ENCODE measurements at regions of chr3 and their contacts with region 1.

Region 1: DNA sequence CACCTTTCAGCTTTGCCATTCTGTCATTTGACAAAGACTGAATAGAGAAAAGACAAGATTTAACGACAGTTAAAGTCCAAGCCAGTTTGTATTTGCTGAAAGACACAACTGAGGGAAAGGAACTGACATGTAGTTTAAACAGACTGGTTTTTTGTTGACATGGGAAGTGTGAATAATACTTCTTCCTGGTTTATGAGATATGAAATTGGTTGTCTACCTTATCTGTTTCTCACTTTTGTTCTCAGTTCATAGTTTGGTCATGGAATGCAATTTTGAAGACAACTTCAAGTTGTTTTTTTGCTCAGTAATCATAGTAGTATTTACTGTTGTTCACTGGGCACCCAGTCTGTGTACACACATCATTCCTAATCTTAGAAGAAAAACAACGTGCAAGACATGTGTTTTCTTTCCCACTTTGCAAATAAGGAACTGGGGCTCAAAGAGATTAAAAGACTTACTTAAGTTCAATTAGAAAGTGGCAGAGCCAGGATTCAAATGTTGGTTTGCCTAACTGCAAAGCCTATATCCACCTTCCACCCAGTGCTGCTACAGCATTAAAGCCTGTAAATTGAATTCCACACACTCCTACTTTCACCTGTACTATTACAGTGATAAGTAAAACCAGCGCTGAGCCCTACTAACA is 103.5 kb downstream of the LPP start:
- DNase-seq: no peak
- H3K4me3 Mint-ChIP-seq: no peak overlapping the region
- H3K27ac Mint-ChIP-seq: peak overlapping the region; percentile 63
- H3K4me1 Mint-ChIP-seq: peaks cover 62% of the 10 kb centered on the region
- H3K27me3 Mint-ChIP-seq: peaks cover 2% of the 10 kb centered on the region

Region 2: DNA sequence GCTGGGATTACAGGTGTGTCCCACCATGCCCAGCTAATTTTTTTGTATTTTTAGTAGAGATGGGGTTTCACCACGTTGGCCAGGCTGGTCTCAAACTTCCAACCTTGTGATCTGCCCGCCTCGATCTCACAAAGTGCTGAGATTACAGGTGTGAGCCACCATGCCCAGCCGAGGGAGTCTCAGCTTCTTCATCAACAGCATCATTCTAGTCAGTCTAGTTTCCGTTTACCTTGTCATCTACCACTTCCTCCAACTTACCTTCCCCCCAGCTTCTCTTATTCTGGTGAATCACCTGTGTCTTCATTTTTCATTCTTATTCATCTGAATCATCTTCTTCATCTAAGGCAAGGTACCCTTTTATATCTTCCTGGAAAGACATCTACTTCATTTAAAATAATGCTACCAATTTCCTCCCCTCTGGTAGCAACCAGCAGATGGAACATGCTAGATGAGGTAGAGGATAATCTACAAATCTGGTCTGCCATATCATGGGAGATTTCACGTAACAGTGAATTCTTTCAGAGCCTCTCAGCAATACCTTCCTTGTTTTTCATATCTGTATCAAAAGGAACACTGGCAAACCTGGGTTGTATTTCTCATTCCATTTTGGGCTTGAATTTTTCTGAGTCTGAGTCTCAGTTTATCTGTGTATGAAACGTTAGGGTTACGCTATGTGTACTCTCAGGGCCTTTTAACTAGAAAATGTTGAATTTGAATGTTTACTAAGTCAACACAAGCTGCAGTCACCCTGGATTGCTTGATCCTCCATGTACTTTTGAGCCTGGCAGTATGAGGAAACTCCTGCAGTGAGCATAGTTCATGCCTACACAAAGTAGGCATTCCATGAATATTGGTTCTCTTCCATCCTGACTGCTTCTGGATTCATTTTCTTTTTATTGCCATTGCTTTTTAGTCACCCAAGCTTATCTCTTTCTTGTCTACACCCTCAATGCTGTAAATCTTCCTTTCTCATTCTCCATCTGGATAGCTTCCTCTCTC is 86.7 kb before region 1 on chr3:
- intact Hi-C with region 1: loop called (anchors 5 kb)
- DNase-seq: no peak
- H3K4me3 Mint-ChIP-seq: peak overlapping the region; percentile 9
- H3K27ac Mint-ChIP-seq: peak overlapping the region; percentile 49
- H3K4me1 Mint-ChIP-seq: peaks cover 52% of the 10 kb centered on the region
- H3K27me3 Mint-ChIP-seq: no peaks in the 10 kb centered on the region

Region 3: GRCh38 chr3:188272481-188273372 is 15.2 kb after region 1 on chr3:
- intact Hi-C with region 1: loop called (anchors 2 kb)
- DNase-seq: no peak
- H3K4me3 Mint-ChIP-seq: no peak overlapping the region
- H3K27ac Mint-ChIP-seq: no peak overlapping the region
- H3K4me1 Mint-ChIP-seq: peaks cover 46% of the 10 kb centered on the region
- H3K27me3 Mint-ChIP-seq: peaks cover 2% of the 10 kb centered on the region

Region 4: DNA sequence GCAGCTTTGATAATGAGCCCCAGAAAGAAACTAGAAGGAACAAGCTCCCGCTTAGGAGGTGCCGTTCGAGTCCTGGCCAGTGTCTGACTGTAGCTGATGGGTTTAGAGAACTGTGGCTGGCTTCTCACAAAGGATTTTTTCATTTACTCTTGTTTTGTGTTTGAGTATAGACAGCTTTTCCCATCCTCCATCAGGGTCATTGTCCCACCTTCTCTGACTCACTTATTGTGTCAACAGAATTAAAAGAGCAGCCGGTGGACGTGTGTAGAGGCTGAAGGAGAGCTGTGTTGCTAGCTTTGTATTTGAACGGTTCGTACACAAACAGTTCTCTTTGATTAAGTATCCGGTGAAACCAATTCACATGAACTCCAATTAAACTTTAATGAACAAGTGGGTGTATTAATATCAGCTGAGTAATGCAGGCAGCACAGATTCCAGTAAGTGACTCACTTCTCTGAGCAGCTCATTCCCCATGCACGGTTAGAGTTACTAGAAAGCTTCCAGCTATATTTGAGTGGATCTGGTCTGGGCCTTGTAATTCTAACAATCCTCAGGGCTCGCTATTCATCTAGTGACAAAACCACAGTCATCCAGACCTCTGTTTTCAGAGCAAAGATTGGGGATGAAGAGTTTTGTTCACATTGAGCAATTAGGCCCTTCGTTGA is 37.5 kb after region 1 on chr3:
- intact Hi-C with region 1: loop called (anchors 1 kb)
- DNase-seq: no peak
- H3K4me3 Mint-ChIP-seq: no peak overlapping the region
- H3K27ac Mint-ChIP-seq: peak overlapping the region; percentile 33
- H3K4me1 Mint-ChIP-seq: peaks cover 86% of the 10 kb centered on the region
- H3K27me3 Mint-ChIP-seq: no peaks in the 10 kb centered on the region

Region 5: DNA sequence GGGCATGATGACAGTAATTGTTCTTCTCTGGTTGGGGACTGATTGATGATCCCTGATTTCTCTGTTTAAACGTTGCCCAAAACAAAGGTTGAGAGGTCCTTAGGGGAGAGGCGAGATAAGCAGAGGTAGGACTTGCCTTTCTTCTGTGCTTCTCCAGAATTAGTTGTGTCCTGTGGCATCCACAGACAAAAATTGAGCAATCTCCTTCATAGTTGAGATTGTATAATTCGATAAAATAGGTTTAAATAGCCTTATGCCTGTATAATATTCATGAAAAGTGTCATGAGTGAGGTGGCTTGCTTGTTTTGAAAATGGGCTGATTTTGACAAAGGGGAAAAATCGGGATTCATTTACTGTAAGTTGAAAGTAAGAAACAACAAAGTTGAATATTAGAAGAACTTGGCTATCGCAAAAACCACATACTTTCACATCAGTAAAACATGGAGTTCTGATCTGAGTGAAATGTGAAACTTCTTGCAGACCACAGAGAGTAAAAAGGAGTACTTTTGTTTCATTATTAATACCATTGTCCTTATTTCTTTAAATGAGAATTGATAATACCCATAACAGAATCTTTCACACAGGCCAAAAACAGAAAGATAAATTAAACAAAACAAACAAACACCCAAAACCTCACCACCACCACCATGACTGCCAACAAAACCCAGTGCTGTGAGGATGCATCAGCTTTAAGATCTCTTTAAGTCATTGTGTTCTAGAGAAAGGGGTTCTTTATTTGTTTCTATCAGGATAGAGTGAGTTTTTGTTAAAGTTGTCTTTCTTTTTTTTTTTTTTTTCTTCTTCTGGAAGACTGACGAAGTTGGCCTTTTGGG is 52.1 kb after region 1 on chr3:
- intact Hi-C with region 1: loop called (anchors 1 kb)
- DNase-seq: no peak
- H3K4me3 Mint-ChIP-seq: peak overlapping the region; percentile 40
- H3K27ac Mint-ChIP-seq: peak overlapping the region; percentile 64
- H3K4me1 Mint-ChIP-seq: peaks cover 35% of the 10 kb centered on the region
- H3K27me3 Mint-ChIP-seq: peaks cover 9% of the 10 kb centered on the region

Region 6: GRCh38 chr3:189233225-189233858 is 975.8 kb after region 1 on chr3:
- intact Hi-C with region 1: no loop called
- DNase-seq: no peak
- H3K4me3 Mint-ChIP-seq: no peak overlapping the region
- H3K27ac Mint-ChIP-seq: no peak overlapping the region
- H3K4me1 Mint-ChIP-seq: peaks cover 24% of the 10 kb centered on the region
- H3K27me3 Mint-ChIP-seq: peaks cover 12% of the 10 kb centered on the region

Measured in activated T-helper 1 cell treated with anti-CD3 and anti-CD28 coated beads, Interleukin-12 subunit alpha, Interleukin-12 subunit beta, Interleukin-2, Interleukin-4 antibody, amounts not matched to agents 30 ng/mL and 10 ng/mL and 1 ng/mL, durations not matched to agents 14 hours and 24 hours and 36 hours (primary cell).